T-cell (primary cell): ENCODE measurements at regions of chr3 and their contacts with region 1.

Region 1: GRCh38 chr3:187025656-187026316 is 95.5 kb downstream of the ST6GAL1 start:
- DNase-seq: peak in 12 of 35 experiments; percentile 15 to 52 (median 34)
- ATAC-seq: peak; percentile 7 to 30 (median 27)
- H3K4me3 ChIP-seq: peak overlapping the region; percentile 41 to 90
- H3K4me3 Mint-ChIP-seq: peak overlapping the region; percentile 79 to 87 (median 84)
- H3K27ac ChIP-seq: peak overlapping the region; percentile 83
- H3K27ac Mint-ChIP-seq: peak overlapping the region; percentile 93 to 96
- H3K4me1 ChIP-seq: peaks cover 40 to 67% of the 10 kb centered on the region in 2 experiments
- H3K4me1 Mint-ChIP-seq: peaks cover 73 to 82% (median 79%) of the 10 kb centered on the region in 3 donors
- H3K27me3 ChIP-seq: no peaks in the 10 kb centered on the region
- H3K27me3 Mint-ChIP-seq: no peaks in the 10 kb centered on the region

Region 2: DNA sequence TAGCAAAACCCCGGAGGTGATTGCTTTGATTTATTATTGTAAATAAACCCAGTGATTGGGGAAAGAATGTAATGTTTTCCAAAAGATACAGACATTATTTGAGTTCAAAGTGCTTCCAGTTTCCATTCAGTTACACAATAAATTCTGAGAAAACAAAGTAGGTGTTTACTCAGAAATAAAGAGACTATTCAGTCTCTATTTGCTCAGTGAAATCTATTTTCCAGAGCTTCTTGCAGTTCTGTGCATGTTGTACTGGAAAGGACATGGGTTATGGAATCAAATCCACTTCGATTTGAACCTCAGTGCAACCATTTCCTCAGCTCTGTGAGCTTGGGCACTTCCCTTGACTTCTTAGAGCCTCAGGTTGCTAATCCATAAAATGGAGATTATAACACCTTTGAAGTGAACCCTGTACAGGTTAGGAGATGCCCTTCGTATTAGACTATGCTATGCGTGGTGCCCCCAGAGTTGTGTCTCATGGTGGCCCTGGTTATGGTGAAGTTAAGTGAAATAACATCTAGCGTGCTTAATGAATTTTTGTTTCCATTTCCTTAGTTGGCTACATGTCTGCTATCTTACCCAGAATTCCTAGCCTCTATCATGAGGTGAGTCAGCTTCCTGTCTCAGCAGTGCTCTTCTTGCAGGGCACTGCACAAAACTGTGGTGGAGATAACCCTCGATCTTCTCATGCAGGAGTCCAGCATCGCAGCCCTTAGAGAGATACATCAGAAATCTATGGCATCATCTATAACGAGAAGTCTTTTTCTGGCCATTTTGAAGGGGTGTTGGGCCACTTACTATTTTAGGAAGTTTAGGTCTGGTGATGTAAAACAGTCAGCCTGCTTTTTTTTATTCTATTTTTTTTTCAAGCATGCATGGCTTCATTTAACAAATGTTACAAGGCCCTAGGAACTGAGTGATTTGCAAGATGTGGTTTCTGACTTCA is 15.8 kb after region 1 on chr3:
- CTCF ChIA-PET with region 1: interaction called, 10 to 14 read pairs
- POLR2A ChIA-PET with region 1: interaction called, 4 to 10 read pairs
- DNase-seq: peak in 21 of 35 experiments; percentile 21 to 78 (median 36)
- ATAC-seq: peak; percentile 93 to 97 (median 95)
- H3K4me3 ChIP-seq: peak overlapping the region; percentile 5 to 8
- H3K4me3 Mint-ChIP-seq: peak overlapping the region; percentile 45 to 75 (median 63)
- H3K27ac ChIP-seq: peak overlapping the region; percentile 88
- H3K27ac Mint-ChIP-seq: peak overlapping the region; percentile 90 to 96
- H3K4me1 ChIP-seq: peaks cover 66 to 71% of the 10 kb centered on the region in 2 experiments
- H3K4me1 Mint-ChIP-seq: peaks cover 83 to 87% (median 86%) of the 10 kb centered on the region in 3 donors
- H3K27me3 ChIP-seq: no peaks in the 10 kb centered on the region
- H3K27me3 Mint-ChIP-seq: no peaks in the 10 kb centered on the region

Region 3: GRCh38 chr3:187066228-187066995 is 40.6 kb after region 1 on chr3:
- CTCF ChIA-PET with region 1: interaction called, 3 to 15 read pairs
- POLR2A ChIA-PET with region 1: interaction called, 8 to 9 read pairs
- DNase-seq: peak in 34 of 35 experiments; percentile 15 to 75 (median 52)
- ATAC-seq: peak; percentile 66 to 79 (median 68)
- H3K4me3 ChIP-seq: no peak overlapping the region
- H3K4me3 Mint-ChIP-seq: peak overlapping the region in 1 of 3 donors; percentile 31
- H3K27ac ChIP-seq: peak overlapping the region; percentile 47
- H3K27ac Mint-ChIP-seq: peak overlapping the region; percentile 63 to 87
- H3K4me1 ChIP-seq: peaks cover 10 to 38% of the 10 kb centered on the region in 2 experiments
- H3K4me1 Mint-ChIP-seq: peaks cover 67 to 82% (median 79%) of the 10 kb centered on the region in 3 donors
- H3K27me3 ChIP-seq: no peaks in the 10 kb centered on the region
- H3K27me3 Mint-ChIP-seq: no peaks in the 10 kb centered on the region